Activated CD4-positive, alpha-beta T cell treated with anti-CD3 and anti-CD28 coated beads for 36 hours (primary cell): ENCODE measurements at regions of chr1 and their contacts with region 1.

Region 1: GRCh38 chr1:58699011-58699762 is 675 bp downstream of the MYSM1 start:
- DNase-seq: no peak
- ATAC-seq: peak; percentile 16
- H3K4me3 Mint-ChIP-seq: peak overlapping the region; percentile 85
- H3K27ac Mint-ChIP-seq: peak overlapping the region; percentile 94
- H3K4me1 Mint-ChIP-seq: peaks cover 11% of the 10 kb centered on the region
- H3K27me3 Mint-ChIP-seq: no peaks in the 10 kb centered on the region

Region 2: GRCh38 chr1:58573705-58574591 is 125.2 kb before region 1 on chr1:
- CTCF ChIA-PET with region 1: no interaction called
- POLR2A ChIA-PET with region 1: no interaction called
- intact Hi-C with region 1: loop called in 1 of 2 experiments (anchors 1 kb)
- DNase-seq: peak; percentile 70
- ATAC-seq: peak; percentile 97
- H3K4me3 Mint-ChIP-seq: no peak overlapping the region
- H3K27ac Mint-ChIP-seq: no peak overlapping the region
- H3K4me1 Mint-ChIP-seq: peaks cover 38% of the 10 kb centered on the region
- H3K27me3 Mint-ChIP-seq: peaks cover 65% of the 10 kb centered on the region

Region 3: DNA sequence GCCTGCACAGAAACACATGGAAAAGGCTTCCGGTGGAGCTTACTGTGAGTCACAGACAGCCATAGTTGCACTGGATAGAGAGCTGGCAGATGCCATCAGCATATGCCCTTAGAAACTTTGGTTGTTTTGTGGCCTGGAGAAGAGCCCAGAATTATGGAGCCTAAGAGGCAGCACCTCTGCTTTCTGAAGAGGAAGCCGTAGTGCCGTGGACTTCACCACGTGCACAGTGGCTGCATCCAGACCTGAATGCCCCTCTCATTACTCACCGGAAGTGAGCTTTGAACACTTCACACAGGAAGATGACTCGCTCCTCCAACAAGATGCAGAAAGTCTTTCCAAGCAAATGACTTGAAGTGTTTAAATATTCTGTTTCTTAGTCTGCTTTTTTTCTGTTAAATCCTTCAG is 56.3 kb after region 1 on chr1:
- CTCF ChIA-PET with region 1: no interaction called
- POLR2A ChIA-PET with region 1: no interaction called
- intact Hi-C with region 1: loop called (anchors 2 kb)
- DNase-seq: peak; percentile 82
- ATAC-seq: peak; percentile 96
- H3K4me3 Mint-ChIP-seq: peak overlapping the region; percentile 30
- H3K27ac Mint-ChIP-seq: peak overlapping the region; percentile 84
- H3K4me1 Mint-ChIP-seq: peaks cover 36% of the 10 kb centered on the region
- H3K27me3 Mint-ChIP-seq: no peaks in the 10 kb centered on the region

Region 4: GRCh38 chr1:59814180-59814900 is 1115.2 kb after region 1 on chr1:
- CTCF ChIA-PET with region 1: no interaction called
- POLR2A ChIA-PET with region 1: no interaction called
- intact Hi-C with region 1: loop called in 1 of 2 experiments (anchors 1 kb)
- DNase-seq: peak; percentile 92
- ATAC-seq: peak; percentile 96
- H3K4me3 Mint-ChIP-seq: no peak overlapping the region
- H3K27ac Mint-ChIP-seq: peak overlapping the region; percentile 73
- H3K4me1 Mint-ChIP-seq: peaks cover 8% of the 10 kb centered on the region
- H3K27me3 Mint-ChIP-seq: peaks cover 5% of the 10 kb centered on the region